ENCODE measurements at regions of chr7 and their contacts with region 1.

Region 1: GRCh38 chr7:24587848-24588247 is 14.6 kb downstream of the PALS2 start:
- DNase-seq: peak; percentile 31 to 80
- ATAC-seq: peak; percentile 73 to 89 (median 87)
- H3K4me3 ChIP-seq: no peak overlapping the region
- H3K4me3 Mint-ChIP-seq: no peak overlapping the region
- H3K27ac ChIP-seq: no peak overlapping the region
- H3K27ac Mint-ChIP-seq: no peak overlapping the region
- H3K4me1 ChIP-seq: no peaks in the 10 kb centered on the region
- H3K4me1 Mint-ChIP-seq: peaks cover 0 to 5% of the 10 kb centered on the region in 2 donors
- H3K27me3 ChIP-seq: no peaks in the 10 kb centered on the region
- H3K27me3 Mint-ChIP-seq: peaks cover 2 to 9% of the 10 kb centered on the region in 2 donors
- CTCF ChIP-seq: peak; percentile 74

Region 2: DNA sequence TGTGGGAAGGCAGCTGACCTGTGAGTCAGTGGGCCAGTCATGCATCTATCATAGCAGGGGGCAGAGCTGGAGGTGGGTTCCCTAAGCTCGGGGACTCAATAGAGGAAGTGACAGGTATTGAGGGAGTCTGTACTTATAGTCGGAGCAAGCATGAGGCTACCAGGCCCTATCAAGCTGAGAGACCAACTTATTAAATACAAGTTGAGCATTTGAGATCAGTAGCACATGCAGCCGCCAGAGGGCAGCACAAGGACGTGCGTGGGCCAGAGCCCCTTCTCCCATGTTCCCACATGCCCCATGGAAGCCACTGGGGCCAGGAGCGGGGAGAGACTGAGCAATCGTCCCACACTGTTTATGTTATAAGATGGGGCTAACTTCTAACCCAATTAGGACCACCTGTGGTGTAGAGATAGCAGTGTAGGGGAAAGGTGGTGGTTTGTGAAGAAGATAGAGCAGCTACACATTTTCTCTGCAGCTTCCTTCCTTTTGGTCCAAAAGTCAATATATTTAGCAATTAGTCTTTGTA is 890.9 kb before region 1 on chr7:
- intact Hi-C with region 1: loop called (anchors 10 kb)
- DNase-seq: peak; percentile 50 to 76
- ATAC-seq: peak; percentile 71 to 75 (median 75)
- H3K4me3 ChIP-seq: no peak overlapping the region
- H3K4me3 Mint-ChIP-seq: no peak overlapping the region
- H3K27ac ChIP-seq: no peak overlapping the region
- H3K27ac Mint-ChIP-seq: no peak overlapping the region
- H3K4me1 ChIP-seq: no peaks in the 10 kb centered on the region
- H3K4me1 Mint-ChIP-seq: peaks cover 7 to 9% of the 10 kb centered on the region in 2 donors
- H3K27me3 ChIP-seq: no peaks in the 10 kb centered on the region
- H3K27me3 Mint-ChIP-seq: no peaks in the 10 kb centered on the region
- CTCF ChIP-seq: peak; percentile 79

Region 3: DNA sequence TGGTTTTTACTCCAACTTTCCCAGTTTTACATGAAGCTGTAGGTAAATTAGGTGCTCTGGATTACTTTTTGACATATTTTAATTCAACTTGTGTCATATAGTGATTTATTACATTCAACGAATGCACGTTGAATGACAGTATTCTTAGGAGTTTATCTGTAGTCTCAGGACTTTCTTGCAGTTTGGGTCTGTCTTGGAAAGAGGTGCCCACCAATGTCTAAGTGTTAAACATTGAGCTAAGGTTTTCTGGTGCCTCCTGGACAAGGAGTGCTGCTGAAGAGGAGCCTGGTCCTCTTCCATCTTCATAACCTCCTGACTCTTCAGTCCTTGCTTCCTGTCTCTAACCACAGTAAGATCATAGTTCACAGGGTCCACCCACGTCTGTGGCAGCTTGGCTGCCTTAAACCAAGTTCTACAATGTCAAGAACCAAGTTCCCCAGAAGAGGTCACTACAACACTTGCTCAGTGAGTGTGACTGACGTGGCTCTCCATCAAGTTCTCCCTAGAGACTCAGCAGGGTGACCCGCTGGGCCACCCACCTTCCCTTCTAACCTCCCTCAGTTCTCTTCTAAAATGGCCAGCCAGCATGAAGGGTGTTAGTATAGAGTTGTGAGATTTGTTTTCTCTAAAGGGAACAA is 297.7 kb before region 1 on chr7:
- intact Hi-C with region 1: loop called (anchors 1 kb)
- DNase-seq: peak in 1 of 2 donors; percentile 62
- ATAC-seq: peak; percentile 82 to 93 (median 87)
- H3K4me3 ChIP-seq: no peak overlapping the region
- H3K4me3 Mint-ChIP-seq: no peak overlapping the region
- H3K27ac ChIP-seq: no peak overlapping the region
- H3K27ac Mint-ChIP-seq: no peak overlapping the region
- H3K4me1 ChIP-seq: no peaks in the 10 kb centered on the region
- H3K4me1 Mint-ChIP-seq: peaks cover 6 to 7% of the 10 kb centered on the region in 2 donors
- H3K27me3 ChIP-seq: peaks cover 5% of the 10 kb centered on the region
- H3K27me3 Mint-ChIP-seq: peaks cover 20 to 58% of the 10 kb centered on the region in 2 donors
- CTCF ChIP-seq: peak; percentile 42

Region 4: GRCh38 chr7:24401628-24402593 is 185.9 kb before region 1 on chr7:
- intact Hi-C with region 1: loop called (anchors 2 kb)
- DNase-seq: peak in 1 of 2 donors; percentile 41
- ATAC-seq: peak in 1 of 3 donors; percentile 43
- H3K4me3 ChIP-seq: no peak overlapping the region
- H3K4me3 Mint-ChIP-seq: no peak overlapping the region
- H3K27ac ChIP-seq: no peak overlapping the region
- H3K27ac Mint-ChIP-seq: no peak overlapping the region
- H3K4me1 ChIP-seq: no peaks in the 10 kb centered on the region
- H3K4me1 Mint-ChIP-seq: peaks cover 18 to 19% of the 10 kb centered on the region in 2 donors
- H3K27me3 ChIP-seq: no peaks in the 10 kb centered on the region
- H3K27me3 Mint-ChIP-seq: peaks cover 0 to 14% of the 10 kb centered on the region in 2 donors
- CTCF ChIP-seq: peak; percentile 31